ENCODE measurements at regions of chr10 and their contacts with region 1.

Region 1: GRCh38 chr10:35195361-35196306 is 69.0 kb downstream of the CREM start:
- DNase-seq: peak; percentile 44
- ATAC-seq: peak; percentile 88
- H3K4me3 Mint-ChIP-seq: peak overlapping the region; percentile 92
- H3K27ac Mint-ChIP-seq: peak overlapping the region; percentile 99
- H3K4me1 Mint-ChIP-seq: peaks cover 34% of the 10 kb centered on the region
- H3K27me3 Mint-ChIP-seq: no peaks in the 10 kb centered on the region
- CTCF ChIP-seq: no peak

Region 2: DNA sequence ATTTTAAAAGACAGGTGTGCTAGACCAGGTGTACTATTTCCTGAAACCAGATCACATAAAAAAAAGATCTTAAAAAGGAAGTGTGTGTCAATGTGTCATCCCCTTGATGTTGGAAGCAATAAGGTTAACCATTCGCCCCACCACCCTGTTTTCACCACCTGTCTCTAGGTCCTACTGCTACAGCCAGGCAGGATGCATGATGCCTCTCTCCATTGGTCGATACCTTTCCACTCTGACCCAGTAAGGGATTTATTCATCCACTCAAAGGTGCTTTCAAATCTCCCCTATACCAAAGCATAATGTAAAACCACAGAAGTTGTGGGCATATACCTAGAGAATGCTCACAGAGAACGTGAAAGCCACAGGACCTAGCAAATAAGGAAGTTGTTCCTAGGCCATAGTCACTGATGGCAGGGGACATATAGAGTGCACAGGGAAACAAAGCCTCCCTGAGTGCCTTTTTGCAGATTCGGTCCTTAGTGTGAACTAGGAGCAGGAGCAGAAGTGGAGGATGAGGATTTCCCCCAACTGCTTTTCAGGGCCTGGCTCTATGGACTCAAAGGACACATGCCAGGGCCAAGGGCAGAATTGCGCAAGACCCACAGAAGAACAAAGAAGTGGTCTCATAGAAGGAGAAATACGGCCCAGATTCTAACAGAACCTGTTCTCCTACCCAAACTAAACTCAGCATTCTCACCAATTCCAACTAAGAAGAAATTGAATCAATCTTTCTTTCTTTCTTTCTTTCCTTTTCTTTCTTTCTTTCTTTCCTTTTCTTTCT is 1229.6 kb before region 1 on chr10:
- CTCF ChIA-PET with region 1: no interaction called
- POLR2A ChIA-PET with region 1: no interaction called
- intact Hi-C with region 1: no loop called
- DNase-seq: no peak
- ATAC-seq: no peak
- H3K4me3 Mint-ChIP-seq: no peak overlapping the region
- H3K27ac Mint-ChIP-seq: no peak overlapping the region
- H3K4me1 Mint-ChIP-seq: no peaks in the 10 kb centered on the region
- H3K27me3 Mint-ChIP-seq: no peaks in the 10 kb centered on the region
- CTCF ChIP-seq: no peak

Region 3: GRCh38 chr10:34889004-34889869 is 306.4 kb before region 1 on chr10:
- CTCF ChIA-PET with region 1: no interaction called
- POLR2A ChIA-PET with region 1: no interaction called
- intact Hi-C with region 1: no loop called
- DNase-seq: no peak
- ATAC-seq: no peak
- H3K4me3 Mint-ChIP-seq: no peak overlapping the region
- H3K27ac Mint-ChIP-seq: no peak overlapping the region
- H3K4me1 Mint-ChIP-seq: no peaks in the 10 kb centered on the region
- H3K27me3 Mint-ChIP-seq: no peaks in the 10 kb centered on the region
- CTCF ChIP-seq: no peak

Region 4: GRCh38 chr10:35119378-35119777 is 76.3 kb before region 1 on chr10:
- CTCF ChIA-PET with region 1: interaction called, 134 read pairs
- POLR2A ChIA-PET with region 1: interaction called, 570 read pairs
- intact Hi-C with region 1: loop called (anchors 1 kb)
- DNase-seq: no peak
- ATAC-seq: no peak
- H3K4me3 Mint-ChIP-seq: no peak overlapping the region
- H3K27ac Mint-ChIP-seq: no peak overlapping the region
- H3K4me1 Mint-ChIP-seq: peaks cover 5% of the 10 kb centered on the region
- H3K27me3 Mint-ChIP-seq: no peaks in the 10 kb centered on the region
- CTCF ChIP-seq: no peak

Region 5: GRCh38 chr10:35153716-35154479 is 41.7 kb before region 1 on chr10:
- CTCF ChIA-PET with region 1: interaction called, 30 read pairs
- POLR2A ChIA-PET with region 1: interaction called, 120 read pairs
- intact Hi-C with region 1: loop called (anchors 1 kb)
- DNase-seq: no peak
- ATAC-seq: no peak
- H3K4me3 Mint-ChIP-seq: no peak overlapping the region
- H3K27ac Mint-ChIP-seq: no peak overlapping the region
- H3K4me1 Mint-ChIP-seq: peaks cover 34% of the 10 kb centered on the region
- H3K27me3 Mint-ChIP-seq: no peaks in the 10 kb centered on the region
- CTCF ChIP-seq: no peak

Region 6: DNA sequence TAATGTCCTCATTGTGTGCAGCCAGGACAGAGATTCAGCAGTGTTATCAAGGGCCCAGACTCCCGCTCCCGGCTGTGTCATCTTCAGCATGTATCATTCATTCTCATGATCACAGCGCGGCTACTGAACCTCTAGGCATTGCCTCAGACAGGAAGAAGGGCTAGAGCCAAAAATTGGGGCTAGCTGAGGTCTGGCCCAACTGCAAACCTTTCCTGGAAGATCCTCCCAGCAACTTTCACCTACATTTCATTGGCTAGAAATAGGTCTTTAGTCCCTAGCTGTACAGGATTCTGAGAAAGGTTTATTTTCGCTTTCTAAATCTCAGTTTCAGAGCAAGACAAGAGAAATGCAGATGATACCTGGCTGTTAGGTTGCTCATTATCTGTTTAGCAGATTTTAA is 12.9 kb after region 1 on chr10:
- CTCF ChIA-PET with region 1: interaction called, 7 read pairs
- POLR2A ChIA-PET with region 1: interaction called, 13 read pairs
- intact Hi-C with region 1: no loop called
- DNase-seq: no peak
- ATAC-seq: no peak
- H3K4me3 Mint-ChIP-seq: no peak overlapping the region
- H3K27ac Mint-ChIP-seq: peak overlapping the region; percentile 26
- H3K4me1 Mint-ChIP-seq: peaks cover 10% of the 10 kb centered on the region
- H3K27me3 Mint-ChIP-seq: no peaks in the 10 kb centered on the region
- CTCF ChIP-seq: no peak

Region 7: DNA sequence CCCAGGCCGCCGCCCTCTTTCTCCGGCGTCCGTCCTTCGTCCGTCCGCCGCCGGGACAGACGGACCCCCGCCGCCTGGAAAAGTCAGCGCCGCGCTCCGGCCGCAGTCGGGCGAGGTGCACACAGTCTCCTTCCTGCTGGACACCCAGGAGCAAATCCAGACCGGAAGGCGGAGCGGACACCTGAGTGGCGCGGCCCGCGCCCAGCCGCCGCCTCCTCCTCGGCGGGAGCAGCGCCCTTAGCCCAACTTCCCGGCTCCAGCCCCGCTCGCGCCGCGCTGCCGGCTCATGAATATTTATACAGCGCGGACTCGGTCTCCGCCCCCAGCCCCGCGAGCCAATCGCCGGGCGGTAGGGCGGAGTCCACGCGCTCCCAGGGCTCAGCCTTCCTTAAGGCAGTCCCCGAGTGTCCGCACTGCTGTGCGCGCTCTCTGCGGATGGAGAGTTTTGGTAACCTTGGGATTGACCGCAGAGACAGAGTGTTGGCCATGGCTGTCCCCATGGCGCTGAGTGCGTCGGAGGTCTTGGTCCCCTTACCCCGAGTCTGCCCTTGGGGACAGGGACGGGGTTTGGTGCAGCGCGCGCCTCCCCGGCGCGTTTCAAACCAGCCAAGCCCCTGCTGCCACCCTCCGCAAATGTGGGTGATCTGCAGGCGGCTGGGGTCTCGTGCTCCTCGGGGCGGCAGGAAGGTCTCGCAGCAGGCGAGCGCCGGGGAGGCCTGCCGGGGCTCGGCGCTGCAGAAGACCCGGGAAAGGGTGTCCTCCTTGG is 446.6 kb after region 1 on chr10 and contains the start of gene FZD8:
- CTCF ChIA-PET with region 1: no interaction called
- POLR2A ChIA-PET with region 1: no interaction called
- intact Hi-C with region 1: loop called (anchors 5 kb)
- DNase-seq: peak; percentile 69
- ATAC-seq: peak; percentile 87
- H3K4me3 Mint-ChIP-seq: peak within 1 kb of the TSS; percentile 88
- H3K27ac Mint-ChIP-seq: no peak within 1 kb of the TSS
- H3K4me1 Mint-ChIP-seq: peaks cover 30% of the 10 kb centered on the region
- H3K27me3 Mint-ChIP-seq: peaks cover 33% of the 10 kb centered on the region
- CTCF ChIP-seq: no peak
- total RNA-seq, gene FZD8: 0.17 and 0.22 TPM in 2 replicates

Measured in activated B cell treated with CpG ODN at 0.5 μM for 24 hours (primary cell).